ENCODE measurements at regions of chr7 and their contacts with region 1.

Region 1: GRCh38 chr7:128164061-128164954 is 76.8 kb upstream of the LEP start:
- DNase-seq: peak; percentile 96
- H3K4me3 ChIP-seq: no peak overlapping the region
- H3K27ac ChIP-seq: peak overlapping the region; percentile 92
- H3K4me1 ChIP-seq: peaks cover 61% of the 10 kb centered on the region
- H3K27me3 ChIP-seq: peaks cover 6% of the 10 kb centered on the region
- CTCF ChIP-seq: no peak

Region 2: DNA sequence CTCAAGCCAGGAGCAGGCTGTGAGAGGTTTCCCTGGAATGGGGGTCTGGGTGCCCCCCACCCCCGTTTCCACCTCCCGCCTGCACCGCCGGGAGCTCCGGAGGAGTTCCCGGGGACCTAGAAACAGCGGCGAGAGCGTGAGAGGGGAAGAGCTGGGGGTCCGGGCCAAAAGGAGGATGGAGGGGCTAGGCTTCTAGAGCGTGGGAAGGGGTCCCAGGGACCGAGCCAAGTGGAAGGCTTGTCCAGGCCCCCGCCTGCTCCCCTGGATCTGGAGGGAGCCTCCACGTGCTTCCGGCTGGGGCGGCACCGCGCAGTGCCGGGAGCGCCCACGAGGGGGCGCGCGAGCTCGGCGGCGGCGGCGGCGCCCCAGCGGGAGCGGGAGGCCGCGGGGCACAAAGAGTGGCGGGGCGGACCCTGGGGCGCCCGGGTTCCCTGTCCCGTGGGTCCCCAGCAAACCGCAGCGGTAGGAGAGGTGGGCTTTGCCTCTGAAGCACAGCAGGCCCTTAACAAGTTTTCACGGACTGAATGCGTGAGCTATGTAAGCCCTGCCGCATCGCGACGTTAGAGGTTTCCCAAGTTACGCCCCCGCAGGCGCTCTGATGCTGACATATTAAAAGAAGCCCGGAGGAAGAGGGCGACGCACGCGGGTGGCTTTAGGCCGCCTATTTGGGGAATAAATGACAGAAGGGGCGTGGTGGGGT is 28.6 kb before region 1 on chr7:
- CTCF ChIA-PET with region 1: no interaction called
- dilution Hi-C with region 1: no loop called
- in situ Hi-C with region 1: no loop called
- intact Hi-C with region 1: loop called (anchors 1 kb)
- DNase-seq: peak; percentile 45
- H3K4me3 ChIP-seq: peak overlapping the region; percentile 62 to 66 (median 64)
- H3K27ac ChIP-seq: no peak overlapping the region
- H3K4me1 ChIP-seq: peaks cover 13% of the 10 kb centered on the region
- H3K27me3 ChIP-seq: no peaks in the 10 kb centered on the region
- CTCF ChIP-seq: peak; percentile 57 to 63

Measured in mammary epithelial cell (primary cell).